ENCODE measurements at regions of chr3 and their contacts with region 1.

Region 1: GRCh38 chr3:66816090-66816761 is 181.9 kb upstream of the KBTBD8 start:
- DNase-seq: peak in 3 of 9 experiments; percentile 6 to 63 (median 53)
- ATAC-seq: peak; percentile 73
- H3K4me3 ChIP-seq: no peak overlapping the region
- H3K4me3 Mint-ChIP-seq: no peak overlapping the region
- H3K27ac ChIP-seq: no peak overlapping the region
- H3K27ac Mint-ChIP-seq: no peak overlapping the region
- H3K4me1 ChIP-seq: no peaks in the 10 kb centered on the region
- H3K4me1 Mint-ChIP-seq: no peaks in the 10 kb centered on the region
- H3K27me3 ChIP-seq: no peaks in the 10 kb centered on the region
- H3K27me3 Mint-ChIP-seq: peaks cover 7% of the 10 kb centered on the region
- CTCF ChIP-seq: peak; percentile 70

Region 2: DNA sequence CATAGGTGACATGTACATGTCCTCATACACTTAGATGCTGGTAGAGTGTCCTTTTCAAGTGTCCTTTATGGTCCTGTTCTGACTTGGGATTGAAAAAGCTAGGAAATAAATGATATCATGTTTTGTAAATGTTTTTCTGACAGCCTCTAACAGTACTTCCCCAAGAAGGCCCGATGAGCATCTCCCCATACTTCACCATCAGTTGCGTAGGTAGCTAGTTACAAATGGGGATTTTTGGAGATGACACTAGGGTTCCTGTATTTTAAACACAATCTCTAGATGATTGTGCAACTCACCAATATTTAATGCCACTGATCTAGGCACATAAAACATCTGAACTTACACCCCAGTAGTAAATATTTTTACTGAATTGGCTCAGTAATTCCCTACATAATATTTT is 567.6 kb before region 1 on chr3:
- CTCF ChIA-PET with region 1: interaction called, 158 read pairs
- POLR2A ChIA-PET with region 1: no interaction called
- intact Hi-C with region 1: no loop called
- DNase-seq: no peak
- ATAC-seq: no peak
- H3K4me3 ChIP-seq: no peak overlapping the region
- H3K4me3 Mint-ChIP-seq: no peak overlapping the region
- H3K27ac ChIP-seq: no peak overlapping the region
- H3K27ac Mint-ChIP-seq: no peak overlapping the region
- H3K4me1 ChIP-seq: no peaks in the 10 kb centered on the region
- H3K4me1 Mint-ChIP-seq: no peaks in the 10 kb centered on the region
- H3K27me3 ChIP-seq: no peaks in the 10 kb centered on the region
- H3K27me3 Mint-ChIP-seq: no peaks in the 10 kb centered on the region
- CTCF ChIP-seq: no peak

Region 3: GRCh38 chr3:66372681-66373350 is 443.4 kb before region 1 on chr3:
- CTCF ChIA-PET with region 1: interaction called, 11 read pairs
- POLR2A ChIA-PET with region 1: no interaction called
- intact Hi-C with region 1: no loop called
- DNase-seq: peak; percentile 30 to 76 (median 55)
- ATAC-seq: peak; percentile 83
- H3K4me3 ChIP-seq: no peak overlapping the region
- H3K4me3 Mint-ChIP-seq: no peak overlapping the region
- H3K27ac ChIP-seq: no peak overlapping the region
- H3K27ac Mint-ChIP-seq: peak overlapping the region; percentile 52
- H3K4me1 ChIP-seq: no peaks in the 10 kb centered on the region
- H3K4me1 Mint-ChIP-seq: peaks cover 5% of the 10 kb centered on the region
- H3K27me3 ChIP-seq: no peaks in the 10 kb centered on the region
- H3K27me3 Mint-ChIP-seq: no peaks in the 10 kb centered on the region
- CTCF ChIP-seq: peak; percentile 38